ENCODE measurements at regions of chr12 and their contacts with region 1.

Region 1: GRCh38 chr12:109573029-109573913 is at the starts of genes MMAB and MVK:
- DNase-seq: peak; percentile 99
- ATAC-seq: peak; percentile 97
- H3K4me3 Mint-ChIP-seq: peak within 1 kb of the TSS; percentile 90
- H3K27ac Mint-ChIP-seq: peak within 1 kb of the TSS; percentile 96
- H3K4me1 Mint-ChIP-seq: peaks cover 23% of the 10 kb centered on the region
- H3K27me3 Mint-ChIP-seq: no peaks in the 10 kb centered on the region
- total RNA-seq, gene MMAB: 37.7 to 44.3 TPM
- total RNA-seq, gene MVK: 17.8 to 18.7 TPM

Region 2: DNA sequence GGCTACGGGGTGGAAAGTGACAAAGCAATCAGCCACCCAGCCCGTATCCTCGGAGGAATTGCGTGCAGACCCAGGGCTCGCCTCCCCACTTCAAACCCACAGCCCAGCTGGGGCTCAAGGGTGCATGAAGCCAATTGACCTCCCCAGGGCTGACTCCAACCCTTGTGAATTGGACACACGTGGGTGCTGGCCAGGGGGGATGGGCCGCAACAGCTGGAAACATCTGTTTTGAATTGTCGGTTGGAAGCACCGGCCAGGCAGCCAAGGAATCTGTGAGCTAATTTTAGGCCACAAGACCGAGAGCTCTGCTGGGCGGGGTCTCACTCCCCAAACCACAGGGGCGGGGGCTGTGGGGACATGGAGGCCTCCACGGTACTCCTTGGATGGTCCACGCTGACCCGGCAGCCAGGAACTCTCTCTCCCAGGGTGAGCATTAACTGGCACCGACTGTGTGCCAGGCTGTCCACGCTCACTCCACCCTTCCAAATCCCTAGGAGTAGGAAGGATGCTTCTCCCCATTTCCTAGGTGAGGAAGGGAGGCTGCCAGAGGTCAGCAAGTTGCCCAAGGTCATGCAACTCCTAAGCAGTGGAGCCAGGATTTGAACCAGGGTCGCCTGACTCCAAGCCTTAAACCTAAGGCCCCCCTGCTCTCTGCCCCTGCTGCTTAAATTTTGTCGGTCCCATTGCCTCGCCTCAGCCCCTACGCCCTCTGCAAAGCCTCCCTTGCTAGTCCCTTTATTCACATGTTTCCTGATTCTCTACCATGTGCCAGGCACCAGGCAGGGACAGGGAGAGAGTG is 963.5 kb before region 1 on chr12:
- CTCF ChIA-PET with region 1: no interaction called
- POLR2A ChIA-PET with region 1: no interaction called
- intact Hi-C with region 1: no loop called
- DNase-seq: no peak
- ATAC-seq: no peak
- H3K4me3 Mint-ChIP-seq: no peak overlapping the region
- H3K27ac Mint-ChIP-seq: no peak overlapping the region
- H3K4me1 Mint-ChIP-seq: peaks cover 10% of the 10 kb centered on the region
- H3K27me3 Mint-ChIP-seq: no peaks in the 10 kb centered on the region

Region 3: GRCh38 chr12:109052414-109053323 is 520.6 kb before region 1 on chr12 and contains the start of gene USP30:
- CTCF ChIA-PET with region 1: no interaction called
- POLR2A ChIA-PET with region 1: no interaction called
- intact Hi-C with region 1: loop called in 1 of 2 experiments (anchors 2 kb)
- DNase-seq: peak; percentile 91
- ATAC-seq: peak; percentile 70
- H3K4me3 Mint-ChIP-seq: peak within 1 kb of the TSS; percentile 86
- H3K27ac Mint-ChIP-seq: peak within 1 kb of the TSS; percentile 97
- H3K4me1 Mint-ChIP-seq: peaks cover 6% of the 10 kb centered on the region
- H3K27me3 Mint-ChIP-seq: no peaks in the 10 kb centered on the region
- total RNA-seq, gene USP30: 9.2 to 14.5 TPM

Region 4: GRCh38 chr12:109477185-109477962 is 95.9 kb before region 1 on chr12 and contains the starts of genes KCTD10 and UBE3B:
- CTCF ChIA-PET with region 1: interaction called, 3 read pairs
- POLR2A ChIA-PET with region 1: no interaction called
- intact Hi-C with region 1: loop called (anchors 1 to 5 kb)
- DNase-seq: peak; percentile 92
- ATAC-seq: peak; percentile 97
- H3K4me3 Mint-ChIP-seq: peak within 1 kb of the TSS; percentile 95
- H3K27ac Mint-ChIP-seq: peak within 1 kb of the TSS; percentile 99
- H3K4me1 Mint-ChIP-seq: peaks cover 43% of the 10 kb centered on the region
- H3K27me3 Mint-ChIP-seq: no peaks in the 10 kb centered on the region
- total RNA-seq, gene KCTD10: 42.0 to 46.3 TPM
- total RNA-seq, gene UBE3B: 25.7 to 27.2 TPM

Region 5: GRCh38 chr12:109713187-109713984 is 140.1 kb after region 1 on chr12 and contains the start of gene FAM222A:
- CTCF ChIA-PET with region 1: interaction called, 7 read pairs
- POLR2A ChIA-PET with region 1: no interaction called
- intact Hi-C with region 1: loop called (anchors 1 to 10 kb)
- DNase-seq: peak; percentile 97
- ATAC-seq: peak; percentile 95
- H3K4me3 Mint-ChIP-seq: peak within 1 kb of the TSS; percentile 56
- H3K27ac Mint-ChIP-seq: no peak within 1 kb of the TSS
- H3K4me1 Mint-ChIP-seq: peaks cover 4% of the 10 kb centered on the region
- H3K27me3 Mint-ChIP-seq: peaks cover 25% of the 10 kb centered on the region
- total RNA-seq, gene FAM222A: 0.39 to 0.53 TPM

Region 6: DNA sequence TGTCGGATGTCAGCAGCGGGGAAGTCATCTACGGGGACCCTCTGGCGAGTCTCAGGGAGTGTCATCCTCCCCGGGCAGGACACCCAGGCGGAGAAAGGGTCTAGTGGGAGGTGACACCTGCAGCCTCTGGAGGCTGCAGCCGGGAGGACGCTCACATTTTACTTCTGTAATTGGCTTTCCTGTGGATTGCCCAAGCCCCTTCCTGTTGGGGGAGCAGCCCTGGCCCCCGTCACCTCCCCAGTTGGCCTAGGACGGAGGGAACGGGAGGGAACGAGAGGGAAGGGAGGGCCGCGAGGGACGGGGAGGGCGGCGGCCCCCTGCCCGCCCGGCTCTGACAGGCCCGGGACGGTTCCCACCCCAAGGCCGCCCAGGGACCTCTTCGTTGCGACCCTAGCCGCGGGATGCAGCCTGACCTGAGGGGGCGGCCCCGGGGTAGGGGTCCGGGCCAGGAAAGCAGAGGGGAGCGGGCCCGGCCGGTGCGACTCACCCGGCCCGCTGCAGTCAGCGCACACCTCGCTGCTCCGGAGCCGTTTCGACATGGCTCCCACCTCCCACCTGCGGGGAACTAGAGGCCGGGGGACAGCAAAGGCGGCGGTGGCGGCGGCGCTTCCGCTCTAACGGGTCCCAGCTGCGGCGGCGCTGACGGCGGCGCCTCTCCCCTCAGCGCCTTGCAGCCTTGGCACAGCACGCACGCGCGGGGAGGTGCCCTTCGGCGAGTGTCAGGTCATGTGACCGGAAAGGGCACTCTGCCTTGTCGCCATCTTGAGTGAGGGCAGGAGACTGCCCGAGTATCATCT is 422.6 kb after region 1 on chr12 and contains the start of gene GIT2:
- CTCF ChIA-PET with region 1: no interaction called
- POLR2A ChIA-PET with region 1: no interaction called
- intact Hi-C with region 1: loop called in 1 of 2 experiments (anchors 1 kb)
- DNase-seq: peak; percentile 98
- ATAC-seq: peak; percentile 85
- H3K4me3 Mint-ChIP-seq: peak within 1 kb of the TSS; percentile 99
- H3K27ac Mint-ChIP-seq: peak within 1 kb of the TSS; percentile 97
- H3K4me1 Mint-ChIP-seq: peaks cover 65% of the 10 kb centered on the region
- H3K27me3 Mint-ChIP-seq: no peaks in the 10 kb centered on the region
- total RNA-seq, gene GIT2: 50.2 to 58.2 TPM

Region 7: DNA sequence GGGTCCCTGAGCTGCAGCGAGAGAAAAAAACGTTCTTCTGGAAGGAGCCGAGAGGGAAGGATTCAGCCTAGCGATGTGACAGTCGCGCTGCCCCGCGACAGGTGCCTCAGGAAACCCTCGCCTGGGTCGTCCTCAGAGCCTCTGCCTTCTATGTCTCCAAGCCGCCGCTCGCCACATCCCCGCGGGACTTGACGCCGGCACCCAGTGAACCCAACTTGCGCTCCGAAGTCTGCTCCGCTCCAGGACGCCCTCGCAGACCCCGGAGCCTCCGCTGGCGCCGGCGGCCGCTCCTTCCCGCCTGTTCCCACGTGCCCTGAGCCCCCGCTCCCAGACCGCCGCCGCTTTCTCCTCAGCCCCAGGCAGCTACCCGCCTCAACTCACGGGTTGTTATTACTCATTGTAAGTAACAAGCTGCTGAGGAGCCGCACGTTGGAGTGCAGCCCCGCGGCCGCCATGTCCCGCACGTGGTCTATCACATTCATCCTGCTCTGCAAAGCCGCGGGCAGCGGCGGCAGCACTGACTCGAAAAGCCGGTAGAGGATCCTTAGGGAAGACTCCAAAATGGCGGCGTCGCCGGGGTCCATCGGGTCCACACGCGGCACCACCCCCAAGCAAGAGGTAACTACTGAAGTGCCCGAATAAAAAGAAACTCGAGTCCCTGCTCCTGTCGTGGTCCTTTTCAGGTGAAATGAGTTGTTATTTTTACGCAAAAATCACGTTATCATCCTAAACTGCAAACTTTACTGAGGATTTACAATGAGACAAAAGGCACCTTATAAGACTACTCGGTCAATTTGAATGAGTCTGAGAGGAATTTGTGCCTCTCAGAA is 830.1 kb after region 1 on chr12 and contains the start of gene ANAPC7:
- CTCF ChIA-PET with region 1: no interaction called
- POLR2A ChIA-PET with region 1: no interaction called
- intact Hi-C with region 1: loop called in 1 of 2 experiments (anchors 5 kb)
- DNase-seq: peak; percentile 93
- ATAC-seq: peak; percentile 94
- H3K4me3 Mint-ChIP-seq: peak within 1 kb of the TSS; percentile 88
- H3K27ac Mint-ChIP-seq: peak within 1 kb of the TSS; percentile 99
- H3K4me1 Mint-ChIP-seq: peaks cover 21% of the 10 kb centered on the region
- H3K27me3 Mint-ChIP-seq: no peaks in the 10 kb centered on the region
- total RNA-seq, gene ANAPC7: 52.6 to 63.6 TPM